Right cardiac atrium (tissue), 5 donors: ENCODE measurements at regions of chr17 and their contacts with region 1.

Region 1: GRCh38 chr17:17063546-17064122 is 21.4 kb downstream of the MPRIP start:
- DNase-seq: peak; percentile 64 to 86 (median 84)
- ATAC-seq: peak; percentile 57 to 68
- H3K4me3 ChIP-seq: no peak overlapping the region
- H3K27ac ChIP-seq: peak overlapping the region; percentile 5
- H3K4me1 ChIP-seq: peaks cover 35% of the 10 kb centered on the region
- H3K27me3 ChIP-seq: no peaks in the 10 kb centered on the region

Region 2: GRCh38 chr17:17098426-17099179 is 35.0 kb after region 1 on chr17:
- intact Hi-C with region 1: loop called in 1 of 4 experiments (anchors 5 kb)
- DNase-seq: peak; percentile 62 to 86 (median 83)
- ATAC-seq: peak; percentile 67 to 75
- H3K4me3 ChIP-seq: no peak overlapping the region
- H3K27ac ChIP-seq: peak overlapping the region; percentile 65
- H3K4me1 ChIP-seq: peaks cover 49% of the 10 kb centered on the region
- H3K27me3 ChIP-seq: no peaks in the 10 kb centered on the region